AG04449 (cell line): ENCODE measurements at regions of chr1 and their contacts with region 1.

Region 1: DNA sequence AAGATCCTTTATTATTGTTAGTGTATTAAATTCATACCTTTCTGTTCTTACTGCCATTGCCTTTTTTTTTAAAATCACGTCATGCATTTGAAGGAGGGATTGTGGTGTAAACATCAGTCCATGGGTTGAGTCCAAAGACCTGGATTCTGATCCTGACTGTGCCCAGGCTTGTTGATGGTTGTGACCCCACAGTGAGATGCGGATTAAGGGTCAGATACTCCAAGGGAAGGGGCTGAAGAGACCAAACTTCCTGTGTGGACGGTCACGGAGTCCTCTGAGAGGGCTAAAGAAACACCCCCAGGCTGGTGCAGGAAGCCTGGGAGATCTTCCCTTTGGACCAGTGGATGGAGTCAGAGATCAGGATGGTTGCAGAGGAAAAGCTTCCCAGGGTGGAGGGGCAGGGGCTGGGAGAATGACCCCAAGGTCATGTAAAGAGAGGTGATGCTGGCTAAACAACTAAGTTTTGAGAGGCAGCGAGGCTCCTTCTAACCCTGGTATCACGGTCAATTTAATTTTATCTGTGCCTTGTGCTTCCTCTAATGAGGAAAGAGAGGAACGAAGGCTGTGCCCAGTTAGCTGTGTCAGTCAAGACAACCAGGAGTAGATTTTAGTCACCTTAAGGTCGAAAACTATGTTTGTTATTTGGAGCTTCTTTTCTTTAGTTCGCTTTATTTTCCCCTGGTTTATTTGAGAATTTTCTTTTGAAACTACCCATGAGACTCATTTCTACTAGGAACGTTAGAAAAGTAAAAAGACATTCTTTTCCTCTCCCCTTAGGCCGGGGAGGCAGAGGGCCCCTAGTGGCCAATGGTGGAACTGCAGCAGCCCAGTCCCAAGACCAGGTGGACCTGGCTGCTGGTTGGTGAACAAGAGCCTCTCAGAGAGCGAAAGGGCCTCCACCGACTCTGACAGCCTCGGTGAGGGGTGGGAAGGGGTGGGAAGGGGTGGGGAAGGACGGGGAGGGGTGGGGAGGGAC is 8.7 kb upstream of the GPR161 start:
- DNase-seq: no peak
- H3K4me3 ChIP-seq: no peak overlapping the region
- CTCF ChIP-seq: peak; percentile 99

Region 2: DNA sequence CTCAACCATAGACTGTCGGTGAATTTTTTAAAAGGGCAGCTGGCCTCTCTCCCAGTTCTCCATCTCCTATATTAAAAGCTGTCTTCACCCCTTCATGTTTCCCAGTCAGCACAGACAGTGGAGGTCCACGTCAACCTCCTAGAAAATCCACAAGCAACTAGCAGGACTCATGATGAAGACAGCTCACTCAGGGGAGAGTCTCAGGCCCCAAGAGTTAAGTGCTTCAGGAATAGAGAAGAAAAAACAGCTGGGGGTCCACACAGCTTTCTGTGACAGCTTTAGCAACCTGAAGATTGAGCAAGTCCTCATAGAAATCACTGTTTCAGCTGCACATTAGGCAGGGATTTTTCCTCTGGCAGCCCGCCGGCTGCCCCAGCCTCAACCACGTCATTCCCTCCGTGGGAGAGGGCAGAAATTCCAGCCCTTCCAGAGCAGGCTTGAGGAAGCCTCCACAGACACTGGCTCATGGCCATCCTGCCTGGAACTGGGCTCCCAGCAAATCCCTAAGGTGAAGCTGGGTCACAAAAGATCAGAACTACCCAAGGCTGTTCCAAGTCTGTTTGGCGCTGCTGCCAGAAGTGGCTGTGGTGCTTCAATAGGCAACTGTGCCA is 24.0 kb before region 1 on chr1:
- CTCF ChIA-PET with region 1: interaction called, 14 read pairs
- POLR2A ChIA-PET with region 1: no interaction called
- DNase-seq: peak; percentile 75
- H3K4me3 ChIP-seq: no peak overlapping the region
- CTCF ChIP-seq: no peak

Region 3: DNA sequence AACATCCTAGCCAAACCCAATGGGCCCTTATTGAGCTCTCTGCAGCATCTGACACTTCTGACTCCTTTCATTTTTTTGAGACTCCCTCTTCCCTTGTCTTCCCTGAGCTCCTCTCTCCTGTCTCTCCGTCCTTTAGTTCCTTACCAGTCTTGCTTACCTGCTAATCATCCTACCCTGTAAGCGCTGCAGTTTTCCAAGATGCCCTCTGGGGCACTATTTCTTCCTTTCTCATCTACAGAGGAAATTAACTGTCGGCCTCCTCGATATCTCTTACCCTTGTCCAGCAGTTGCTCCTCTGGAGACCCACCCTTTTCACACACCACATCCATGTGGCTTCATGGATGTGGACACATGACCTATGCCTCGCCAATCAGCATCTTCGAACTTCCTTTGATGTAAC is 15.5 kb before region 1 on chr1:
- CTCF ChIA-PET with region 1: interaction called, 39 read pairs
- POLR2A ChIA-PET with region 1: no interaction called
- DNase-seq: no peak
- H3K4me3 ChIP-seq: no peak overlapping the region
- CTCF ChIP-seq: no peak

Region 4: DNA sequence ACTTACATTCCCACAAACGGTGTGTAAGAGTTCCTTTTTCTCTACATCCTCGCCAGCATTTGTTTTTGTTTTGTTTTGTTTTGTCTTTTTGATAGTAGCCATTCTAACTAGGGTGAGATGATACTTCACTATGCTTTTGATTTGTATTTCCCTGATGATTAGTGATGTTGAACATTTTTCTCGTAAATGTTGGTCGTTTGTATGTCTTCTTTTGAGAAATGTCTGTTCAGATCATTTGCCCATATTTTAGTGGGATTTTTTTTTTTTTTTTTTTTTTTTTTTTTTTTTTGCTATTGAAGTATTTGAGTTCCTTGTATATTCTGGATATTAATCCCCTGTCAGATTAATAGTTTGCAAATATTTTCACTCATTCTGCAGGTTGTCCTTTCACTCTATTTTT is 10.4 kb after region 1 on chr1:
- CTCF ChIA-PET with region 1: interaction called, 26 read pairs
- POLR2A ChIA-PET with region 1: no interaction called
- DNase-seq: no peak
- H3K4me3 ChIP-seq: no peak overlapping the region
- CTCF ChIP-seq: no peak

Region 5: DNA sequence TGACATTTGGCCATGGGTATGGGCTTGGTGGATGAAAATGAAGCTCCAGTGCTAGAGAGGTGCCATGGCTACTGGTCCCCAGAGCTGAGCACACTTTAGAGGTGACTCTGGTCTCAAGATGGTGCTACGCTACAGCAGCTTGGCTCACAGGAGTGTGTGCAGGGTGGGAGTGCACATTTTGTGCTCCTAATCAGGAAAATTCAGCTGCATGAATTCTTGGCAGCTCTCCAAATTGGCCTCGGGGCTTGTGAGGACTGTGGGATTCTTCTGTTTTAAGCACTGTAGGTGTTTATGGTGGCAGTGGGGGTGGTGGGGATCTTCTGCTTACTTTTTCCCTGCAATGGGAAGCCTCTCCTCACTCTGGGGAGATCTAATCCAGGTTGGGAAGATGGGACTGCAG is 16.0 kb after region 1 on chr1:
- CTCF ChIA-PET with region 1: interaction called, 26 read pairs
- POLR2A ChIA-PET with region 1: no interaction called
- DNase-seq: no peak
- H3K4me3 ChIP-seq: no peak overlapping the region
- CTCF ChIP-seq: no peak

Region 6: GRCh38 chr1:168216171-168216570 is 70.7 kb after region 1 on chr1:
- CTCF ChIA-PET with region 1: no interaction called
- POLR2A ChIA-PET with region 1: no interaction called
- DNase-seq: no peak
- H3K4me3 ChIP-seq: no peak overlapping the region
- CTCF ChIP-seq: no peak

Region 7: DNA sequence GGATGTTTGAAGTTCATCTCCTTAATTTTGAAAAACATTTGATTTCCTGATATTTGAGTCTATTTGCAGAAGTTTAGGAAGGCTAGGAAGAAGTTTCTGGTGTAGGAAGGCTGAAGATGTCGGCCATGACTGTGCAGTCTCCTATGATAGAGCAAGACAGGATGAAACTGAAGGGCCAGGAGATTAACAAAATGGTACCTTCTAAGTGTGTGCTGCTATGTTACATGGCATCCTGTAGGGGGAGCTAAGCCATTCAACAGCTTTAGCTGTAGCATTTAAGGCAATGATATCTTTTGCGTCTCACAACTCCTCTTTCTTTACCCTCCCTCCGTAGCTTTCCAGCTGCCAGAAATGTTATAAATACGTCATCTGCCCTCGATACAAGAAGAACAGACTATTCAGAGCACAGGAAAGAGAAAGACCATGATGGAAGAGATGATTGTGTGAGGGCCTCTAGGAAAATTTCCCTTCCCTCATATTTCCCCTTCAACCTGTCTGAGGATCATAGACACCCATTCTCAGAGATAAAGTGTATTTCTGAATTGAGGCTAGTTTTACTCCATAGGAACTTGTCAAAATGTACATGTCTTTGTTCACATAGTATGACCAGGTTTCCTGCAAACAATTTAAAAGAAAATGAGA is 492.0 kb after region 1 on chr1:
- CTCF ChIA-PET with region 1: no interaction called
- POLR2A ChIA-PET with region 1: no interaction called
- DNase-seq: no peak
- H3K4me3 ChIP-seq: no peak overlapping the region
- CTCF ChIP-seq: peak; percentile 46